ENCODE measurements at regions of chr3 and their contacts with region 1.

Region 1: DNA sequence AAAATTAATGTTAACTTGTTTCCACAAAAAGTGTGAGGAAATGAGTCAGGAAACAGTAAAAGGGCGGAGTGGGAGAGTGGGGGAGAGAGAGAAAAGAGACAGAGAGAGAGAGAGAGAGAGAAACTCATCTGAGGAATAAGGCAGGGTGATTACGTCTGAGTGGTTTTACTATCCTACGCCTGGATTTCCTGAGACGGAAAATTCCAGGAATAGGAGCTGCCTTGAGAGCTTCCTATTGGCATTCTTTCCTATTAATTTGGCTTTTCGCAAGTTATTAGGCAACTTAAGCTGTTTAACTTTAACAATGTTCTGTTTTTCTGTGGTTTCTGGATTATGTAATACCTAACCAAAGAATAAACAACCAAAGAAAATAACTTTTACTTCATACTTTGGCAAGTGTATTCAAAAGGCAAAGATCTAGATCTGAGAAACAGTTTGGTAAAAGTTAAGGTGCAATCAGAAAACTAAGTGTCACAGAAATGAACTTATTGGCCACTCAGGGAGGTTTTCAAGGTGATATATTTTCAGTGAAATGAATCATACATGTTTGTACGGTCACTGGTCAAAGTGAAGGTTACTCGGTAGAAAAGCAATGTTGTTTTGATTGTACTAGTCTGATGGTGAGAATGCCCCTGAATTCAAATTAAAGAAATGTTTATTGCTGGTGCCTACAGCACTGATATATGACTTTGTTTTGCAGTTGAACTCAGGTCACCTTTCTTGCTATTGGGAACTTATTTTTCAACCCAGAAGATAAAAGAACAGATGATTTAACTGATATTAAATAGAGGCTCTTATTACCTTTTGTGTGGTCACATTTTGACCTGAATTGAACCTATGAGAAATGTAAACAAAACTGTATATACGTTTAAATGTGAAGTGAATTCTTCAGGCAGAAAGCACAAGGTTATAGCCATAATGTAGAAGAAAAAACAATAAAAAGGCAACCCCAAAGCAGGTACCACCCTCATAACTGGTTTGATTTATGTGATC is 39.9 kb upstream of the TNFSF10 start:
- DNase-seq: peak; percentile 19
- H3K4me3 Mint-ChIP-seq: peak overlapping the region; percentile 74
- H3K27ac Mint-ChIP-seq: peak overlapping the region; percentile 94
- H3K4me1 Mint-ChIP-seq: peaks cover 65% of the 10 kb centered on the region
- H3K27me3 Mint-ChIP-seq: no peaks in the 10 kb centered on the region

Region 2: GRCh38 chr3:172061724-172062184 is 501.4 kb before region 1 on chr3:
- intact Hi-C with region 1: no loop called
- DNase-seq: no peak
- H3K4me3 Mint-ChIP-seq: no peak overlapping the region
- H3K27ac Mint-ChIP-seq: no peak overlapping the region
- H3K4me1 Mint-ChIP-seq: peaks cover 47% of the 10 kb centered on the region
- H3K27me3 Mint-ChIP-seq: no peaks in the 10 kb centered on the region

Region 3: DNA sequence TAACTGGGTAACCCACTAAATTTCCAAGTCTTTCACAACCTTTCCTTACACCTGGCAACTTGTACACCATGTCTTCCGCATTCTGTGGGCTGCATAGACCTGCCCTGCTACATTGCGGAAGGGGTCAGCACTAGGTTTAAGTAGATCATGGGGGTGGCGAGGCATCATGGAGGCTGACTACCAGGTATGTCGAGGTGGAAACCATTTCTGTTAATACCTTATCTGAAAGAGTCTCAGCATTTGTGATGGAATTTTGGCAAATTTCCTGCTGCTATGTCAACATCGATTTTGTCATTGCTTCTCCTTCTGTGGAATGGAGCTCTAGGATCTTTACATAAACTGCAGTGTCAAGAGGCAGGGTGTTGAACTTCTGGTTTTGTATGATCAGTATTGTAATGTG is 302.1 kb before region 1 on chr3:
- intact Hi-C with region 1: no loop called
- DNase-seq: no peak
- H3K4me3 Mint-ChIP-seq: no peak overlapping the region
- H3K27ac Mint-ChIP-seq: no peak overlapping the region
- H3K4me1 Mint-ChIP-seq: no peaks in the 10 kb centered on the region
- H3K27me3 Mint-ChIP-seq: no peaks in the 10 kb centered on the region

Region 4: DNA sequence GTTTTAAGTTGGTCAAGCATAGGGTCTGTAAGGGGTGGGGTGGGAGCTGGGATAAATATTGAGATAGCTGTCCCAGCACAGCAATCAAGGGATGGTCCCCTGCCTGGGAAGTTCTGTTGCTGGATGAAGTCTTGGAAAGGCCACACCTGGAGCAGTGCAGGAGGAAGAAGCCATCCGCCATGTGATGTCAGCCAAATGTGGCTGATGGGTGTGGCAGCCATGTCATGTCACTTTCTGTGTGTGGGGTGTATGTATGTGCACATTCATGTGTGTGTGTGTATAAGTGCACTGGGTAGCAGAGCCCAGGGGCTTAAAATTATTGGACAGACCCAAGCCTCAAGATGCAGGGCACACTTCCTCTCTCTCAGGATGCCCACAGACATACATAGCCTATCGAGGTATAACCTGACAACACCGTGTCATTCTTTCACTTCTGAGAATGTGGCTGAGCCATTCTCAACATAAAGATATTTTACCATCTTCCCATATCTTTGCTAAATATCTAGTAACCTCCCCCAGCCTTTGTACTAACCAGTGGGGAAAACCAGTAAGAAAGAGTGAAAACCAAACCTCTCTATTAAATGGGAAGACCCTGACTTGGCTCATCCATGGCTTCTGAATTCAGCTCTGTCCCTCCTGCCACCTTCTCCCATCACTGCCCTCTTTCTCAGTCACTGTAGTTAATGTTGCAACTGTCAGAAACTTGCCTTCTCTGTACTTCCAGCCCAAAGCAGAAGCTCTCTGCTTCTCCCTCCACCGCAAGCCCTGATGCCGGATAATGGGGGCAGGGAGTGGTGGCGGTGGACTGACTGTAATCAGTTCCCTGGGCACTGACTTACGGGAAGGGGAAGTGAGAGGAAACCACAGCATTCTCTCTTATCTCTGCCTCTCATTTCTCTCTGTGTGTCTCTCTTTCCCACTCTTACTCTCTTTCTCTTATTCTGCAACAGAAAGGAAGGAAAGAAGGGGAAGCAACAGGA is 51.1 kb before region 1 on chr3:
- intact Hi-C with region 1: loop called (anchors 1 kb)
- DNase-seq: peak; percentile 69
- H3K4me3 Mint-ChIP-seq: peak overlapping the region; percentile 43
- H3K27ac Mint-ChIP-seq: peak overlapping the region; percentile 88
- H3K4me1 Mint-ChIP-seq: peaks cover 98% of the 10 kb centered on the region
- H3K27me3 Mint-ChIP-seq: no peaks in the 10 kb centered on the region

Region 5: GRCh38 chr3:172530566-172530965 is 32.6 kb before region 1 on chr3:
- intact Hi-C with region 1: loop called (anchors 1 kb)
- DNase-seq: no peak
- H3K4me3 Mint-ChIP-seq: peak overlapping the region; percentile 50
- H3K27ac Mint-ChIP-seq: peak overlapping the region; percentile 93
- H3K4me1 Mint-ChIP-seq: peaks cover 68% of the 10 kb centered on the region
- H3K27me3 Mint-ChIP-seq: no peaks in the 10 kb centered on the region

Region 6: GRCh38 chr3:172573422-172573821 is 10.3 kb after region 1 on chr3:
- intact Hi-C with region 1: loop called (anchors 1 kb)
- DNase-seq: no peak
- H3K4me3 Mint-ChIP-seq: no peak overlapping the region
- H3K27ac Mint-ChIP-seq: no peak overlapping the region
- H3K4me1 Mint-ChIP-seq: peaks cover 48% of the 10 kb centered on the region
- H3K27me3 Mint-ChIP-seq: no peaks in the 10 kb centered on the region

Region 7: GRCh38 chr3:172616031-172616461 is 52.9 kb after region 1 on chr3:
- intact Hi-C with region 1: loop called (anchors 2 kb)
- DNase-seq: no peak
- H3K4me3 Mint-ChIP-seq: peak overlapping the region; percentile 49
- H3K27ac Mint-ChIP-seq: peak overlapping the region; percentile 90
- H3K4me1 Mint-ChIP-seq: peaks cover 31% of the 10 kb centered on the region
- H3K27me3 Mint-ChIP-seq: no peaks in the 10 kb centered on the region